Endothelial cell of umbilical vein (primary cell): ENCODE measurements at regions of chr4 and their contacts with region 1.

Region 1: GRCh38 chr4:169225058-169225751 is 45.6 kb downstream of the SH3RF1 start:
- DNase-seq: peak; percentile 87
- H3K4me3 ChIP-seq: no peak overlapping the region
- H3K27ac ChIP-seq: peak overlapping the region; percentile 79
- H3K4me1 ChIP-seq: peaks cover 38% of the 10 kb centered on the region
- H3K27me3 ChIP-seq: no peaks in the 10 kb centered on the region
- CTCF ChIP-seq: no peak
- POLR2A ChIP-seq: no peak

Region 2: DNA sequence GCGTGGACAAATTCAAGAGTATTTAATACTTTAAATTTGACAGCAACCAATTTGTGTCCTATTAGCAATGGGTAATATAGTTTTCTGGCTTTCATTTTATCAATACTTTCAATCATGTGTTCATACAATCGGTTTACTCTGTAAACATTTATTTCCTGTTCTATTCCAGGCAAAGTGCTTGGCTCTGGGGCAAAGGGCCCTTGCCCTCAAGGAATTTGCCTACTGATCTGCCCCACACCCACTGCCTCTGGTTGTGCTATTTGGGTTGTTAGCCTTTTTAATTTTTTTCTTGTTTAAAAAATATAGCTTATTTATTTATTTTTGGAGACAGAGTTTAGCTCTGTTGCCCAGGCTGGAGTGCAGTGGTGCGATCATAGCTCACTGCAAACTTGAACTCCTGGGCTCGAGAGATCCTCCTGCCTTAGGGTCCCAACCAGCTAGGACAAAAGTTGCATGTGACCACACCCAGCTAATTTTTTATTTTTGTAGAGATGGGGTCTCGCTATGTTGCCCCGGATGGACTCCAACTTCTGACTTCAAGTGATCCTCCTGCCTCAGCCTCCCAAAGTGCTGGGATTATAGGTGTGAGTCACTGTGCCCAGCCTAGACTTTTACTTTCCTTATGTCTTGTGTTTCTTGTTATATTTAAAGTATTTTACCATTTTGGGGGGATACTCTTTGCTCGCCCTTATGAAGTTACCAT is 184.5 kb before region 1 on chr4:
- CTCF ChIA-PET with region 1: no interaction called
- POLR2A ChIA-PET with region 1: no interaction called
- dilution Hi-C with region 1: no loop called
- intact Hi-C with region 1: no loop called
- DNase-seq: no peak
- H3K4me3 ChIP-seq: no peak overlapping the region
- H3K27ac ChIP-seq: no peak overlapping the region
- H3K4me1 ChIP-seq: no peaks in the 10 kb centered on the region
- H3K27me3 ChIP-seq: no peaks in the 10 kb centered on the region
- CTCF ChIP-seq: no peak
- POLR2A ChIP-seq: no peak

Region 3: DNA sequence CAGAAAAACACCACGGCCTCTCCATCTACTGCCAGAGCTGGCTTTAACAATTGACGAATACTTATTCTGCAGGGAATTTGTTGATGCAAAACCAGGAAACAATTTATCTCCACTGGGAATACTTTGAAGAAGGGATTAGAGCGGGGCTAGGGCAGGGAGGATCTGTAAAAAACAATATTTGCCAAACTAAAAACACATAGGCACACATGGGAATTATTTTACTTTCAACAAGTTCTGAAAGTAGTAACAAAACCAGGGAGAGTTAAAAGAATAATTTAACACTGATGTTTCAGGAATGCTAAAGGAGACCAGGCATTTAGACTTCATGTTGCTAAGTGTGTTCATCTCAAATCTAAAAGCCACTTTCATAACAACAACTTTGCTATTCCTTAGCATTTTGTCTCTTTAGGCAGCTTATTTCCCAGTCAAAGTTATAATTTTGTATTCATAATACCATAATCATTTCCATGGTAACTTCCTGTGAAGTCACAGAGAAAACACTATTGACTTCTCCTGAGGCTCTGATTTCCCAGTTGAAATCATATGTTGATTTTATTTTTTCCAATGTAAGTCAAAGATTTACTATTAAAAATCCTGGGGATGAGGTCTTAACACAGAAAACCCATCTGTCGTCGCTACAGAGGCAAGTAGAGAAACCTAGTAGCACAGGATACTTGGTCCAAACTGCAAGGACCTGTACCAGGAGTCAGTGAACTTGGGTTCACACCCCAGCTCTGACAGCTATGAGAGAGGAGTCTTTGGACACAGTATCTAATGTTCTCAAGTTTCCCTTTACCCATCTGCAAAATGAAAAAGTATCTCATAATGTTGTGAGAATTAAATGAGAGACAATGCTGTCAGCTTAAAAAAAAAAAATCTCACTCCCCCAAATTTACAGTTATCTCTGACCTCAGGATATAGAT is 23.7 kb before region 1 on chr4:
- CTCF ChIA-PET with region 1: interaction called, 5 read pairs
- POLR2A ChIA-PET with region 1: no interaction called
- dilution Hi-C with region 1: no loop called
- intact Hi-C with region 1: loop called (anchors 2 kb)
- DNase-seq: peak; percentile 76
- H3K4me3 ChIP-seq: peak overlapping the region in 1 of 3 experiments; percentile 12
- H3K27ac ChIP-seq: peak overlapping the region; percentile 86
- H3K4me1 ChIP-seq: peaks cover 18% of the 10 kb centered on the region
- H3K27me3 ChIP-seq: no peaks in the 10 kb centered on the region
- CTCF ChIP-seq: no peak
- POLR2A ChIP-seq: no peak

Region 4: GRCh38 chr4:169254546-169254983 is 29.4 kb after region 1 on chr4:
- CTCF ChIA-PET with region 1: interaction called, 5 read pairs
- POLR2A ChIA-PET with region 1: no interaction called
- dilution Hi-C with region 1: no loop called
- intact Hi-C with region 1: loop called (anchors 2 kb)
- DNase-seq: peak; percentile 89
- H3K4me3 ChIP-seq: peak overlapping the region in 1 of 3 experiments; percentile 21
- H3K27ac ChIP-seq: peak overlapping the region; percentile 53
- H3K4me1 ChIP-seq: peaks cover 98% of the 10 kb centered on the region
- H3K27me3 ChIP-seq: no peaks in the 10 kb centered on the region
- CTCF ChIP-seq: no peak
- POLR2A ChIP-seq: peak; percentile 41